Caco-2 (cell line): ENCODE measurements at regions of chrX and their contacts with region 1.

Region 1: DNA sequence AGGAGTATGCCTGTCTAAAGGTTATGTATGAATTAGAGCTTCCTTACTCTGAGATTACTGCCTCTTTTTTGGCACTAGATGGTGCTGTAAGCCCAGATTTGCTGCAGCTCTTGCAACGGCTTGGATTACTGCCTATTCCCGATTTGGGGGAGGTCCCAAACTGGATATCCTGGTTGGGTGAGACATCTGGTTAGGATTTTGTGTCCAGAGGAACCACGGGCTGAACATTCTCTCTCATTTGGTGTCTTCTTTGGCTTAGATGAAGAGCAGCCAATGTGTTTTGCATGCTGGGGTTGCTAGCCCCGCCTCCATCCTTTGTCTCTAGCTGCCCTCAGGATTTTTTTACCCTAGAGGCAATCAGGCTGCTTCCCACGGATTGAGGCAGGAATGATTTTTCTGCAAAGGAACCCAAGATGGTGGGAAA is 31.9 kb downstream of the F8A1 start:
- DNase-seq: peak; percentile 50 to 54
- H3K4me3 ChIP-seq: no peak overlapping the region
- H3K4me3 Mint-ChIP-seq: peak overlapping the region; percentile 59
- H3K27ac Mint-ChIP-seq: no peak overlapping the region
- H3K4me1 ChIP-seq: no peaks in the 10 kb centered on the region
- H3K4me1 Mint-ChIP-seq: no peaks in the 10 kb centered on the region
- H3K27me3 ChIP-seq: no peaks in the 10 kb centered on the region
- H3K27me3 Mint-ChIP-seq: peaks cover 5% of the 10 kb centered on the region
- CTCF ChIP-seq: peak; percentile 36 to 63

Region 2: GRCh38 chrX:155056877-155057792 is 139.1 kb after region 1 on chrX:
- CTCF ChIA-PET with region 1: no interaction called
- POLR2A ChIA-PET with region 1: no interaction called
- intact Hi-C with region 1: loop called (anchors 1 kb)
- DNase-seq: peak; percentile 49 to 52
- H3K4me3 ChIP-seq: no peak overlapping the region
- H3K4me3 Mint-ChIP-seq: no peak overlapping the region
- H3K27ac Mint-ChIP-seq: no peak overlapping the region
- H3K4me1 ChIP-seq: no peaks in the 10 kb centered on the region
- H3K4me1 Mint-ChIP-seq: no peaks in the 10 kb centered on the region
- H3K27me3 ChIP-seq: no peaks in the 10 kb centered on the region
- H3K27me3 Mint-ChIP-seq: no peaks in the 10 kb centered on the region
- CTCF ChIP-seq: peak; percentile 44 to 58

Region 3: GRCh38 chrX:155148724-155149537 is 230.9 kb after region 1 on chrX:
- CTCF ChIA-PET with region 1: interaction called, 7 read pairs
- POLR2A ChIA-PET with region 1: no interaction called
- intact Hi-C with region 1: loop called (anchors 10 kb)
- DNase-seq: peak in 1 of 2 experiments; percentile 25
- H3K4me3 ChIP-seq: no peak overlapping the region
- H3K4me3 Mint-ChIP-seq: no peak overlapping the region
- H3K27ac Mint-ChIP-seq: no peak overlapping the region
- H3K4me1 ChIP-seq: no peaks in the 10 kb centered on the region
- H3K4me1 Mint-ChIP-seq: no peaks in the 10 kb centered on the region
- H3K27me3 ChIP-seq: no peaks in the 10 kb centered on the region
- H3K27me3 Mint-ChIP-seq: no peaks in the 10 kb centered on the region
- CTCF ChIP-seq: peak in 1 of 2 experiments; percentile 28